ENCODE measurements at regions of chrX and their contacts with region 1.

Region 1: DNA sequence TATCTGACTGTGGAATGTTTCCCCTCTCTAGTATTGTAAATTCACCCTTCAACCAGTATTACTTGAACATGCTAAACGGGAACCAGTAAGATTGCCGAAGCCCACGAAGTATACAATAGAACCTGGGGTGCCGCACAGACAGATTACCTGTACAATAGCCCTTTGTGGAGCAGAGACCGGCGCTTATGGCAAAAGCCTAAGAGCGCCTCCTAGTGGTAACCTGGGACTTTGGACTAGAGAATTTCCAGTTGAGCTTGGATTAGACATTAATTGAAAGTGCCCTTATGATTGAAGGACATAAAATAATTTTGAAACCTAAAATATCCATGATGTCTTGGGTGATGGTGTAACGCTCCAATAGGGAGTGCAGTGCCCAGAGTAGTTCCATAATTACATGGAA is 14.1 kb downstream of the ZNF157 start:
- DNase-seq: peak; percentile 75 to 86
- H3K4me3 ChIP-seq: no peak overlapping the region
- H3K4me1 ChIP-seq: peaks cover 4% of the 10 kb centered on the region
- H3K27me3 ChIP-seq: no peaks in the 10 kb centered on the region

Region 2: DNA sequence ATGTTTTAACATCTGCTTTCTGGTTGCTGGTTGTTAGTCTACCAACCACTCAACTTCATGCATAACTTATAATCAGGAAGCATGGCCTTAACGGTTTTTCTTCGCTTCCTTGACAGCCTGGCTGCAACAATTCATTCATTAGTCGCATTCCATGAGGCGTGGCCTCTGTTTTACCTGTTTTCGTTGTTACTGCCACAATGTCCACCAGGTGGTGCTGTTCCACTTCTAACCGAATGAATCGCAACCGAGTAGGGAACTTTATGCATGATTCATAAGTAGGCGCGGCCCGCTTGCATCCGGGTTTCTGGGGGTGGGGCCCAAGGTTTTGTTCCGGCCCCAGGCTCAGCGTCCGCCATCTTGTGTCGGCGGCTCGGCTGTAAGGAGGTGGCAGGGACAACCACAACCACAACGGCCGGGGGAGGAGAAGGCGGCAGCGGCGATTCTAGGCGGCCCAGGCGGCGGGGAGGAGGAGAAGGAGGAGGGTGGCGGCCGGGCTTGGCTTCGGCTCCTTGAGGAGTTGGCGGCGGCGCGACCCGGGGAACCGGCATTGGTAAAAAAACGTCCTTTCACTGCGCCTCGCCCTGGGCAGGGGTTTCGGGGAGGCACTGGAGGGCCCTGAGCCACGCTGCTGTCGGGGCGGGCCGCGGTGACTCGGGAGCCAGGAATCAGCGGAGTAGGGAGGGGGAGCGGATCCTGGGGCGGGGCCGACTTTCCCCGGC is 190.9 kb before region 1 on chrX and contains the start of gene UBA1:
- in situ Hi-C with region 1: loop called (anchors 10 kb)
- DNase-seq: peak; percentile 94 to 98
- H3K4me3 ChIP-seq: peak within 1 kb of the TSS; percentile 99
- H3K4me1 ChIP-seq: peaks cover 38% of the 10 kb centered on the region
- H3K27me3 ChIP-seq: no peaks in the 10 kb centered on the region